HAP-1 (cell line): ENCODE measurements at regions of chr17 and their contacts with region 1.

Region 1: GRCh38 chr17:40303009-40303657 is 5.8 kb upstream of the RARA start:
- DNase-seq: peak; percentile 47 to 48
- H3K4me3 ChIP-seq: no peak overlapping the region
- H3K4me1 ChIP-seq: peaks cover 8% of the 10 kb centered on the region
- H3K27me3 ChIP-seq: no peaks in the 10 kb centered on the region

Region 2: GRCh38 chr17:39939588-39940419 is 363.3 kb before region 1 on chr17:
- in situ Hi-C with region 1: no loop called
- DNase-seq: peak in 1 of 2 experiments; percentile 32
- H3K4me3 ChIP-seq: no peak overlapping the region
- H3K4me1 ChIP-seq: no peaks in the 10 kb centered on the region
- H3K27me3 ChIP-seq: peaks cover 4% of the 10 kb centered on the region; the same call in 1 of the 2 replicates

Region 3: DNA sequence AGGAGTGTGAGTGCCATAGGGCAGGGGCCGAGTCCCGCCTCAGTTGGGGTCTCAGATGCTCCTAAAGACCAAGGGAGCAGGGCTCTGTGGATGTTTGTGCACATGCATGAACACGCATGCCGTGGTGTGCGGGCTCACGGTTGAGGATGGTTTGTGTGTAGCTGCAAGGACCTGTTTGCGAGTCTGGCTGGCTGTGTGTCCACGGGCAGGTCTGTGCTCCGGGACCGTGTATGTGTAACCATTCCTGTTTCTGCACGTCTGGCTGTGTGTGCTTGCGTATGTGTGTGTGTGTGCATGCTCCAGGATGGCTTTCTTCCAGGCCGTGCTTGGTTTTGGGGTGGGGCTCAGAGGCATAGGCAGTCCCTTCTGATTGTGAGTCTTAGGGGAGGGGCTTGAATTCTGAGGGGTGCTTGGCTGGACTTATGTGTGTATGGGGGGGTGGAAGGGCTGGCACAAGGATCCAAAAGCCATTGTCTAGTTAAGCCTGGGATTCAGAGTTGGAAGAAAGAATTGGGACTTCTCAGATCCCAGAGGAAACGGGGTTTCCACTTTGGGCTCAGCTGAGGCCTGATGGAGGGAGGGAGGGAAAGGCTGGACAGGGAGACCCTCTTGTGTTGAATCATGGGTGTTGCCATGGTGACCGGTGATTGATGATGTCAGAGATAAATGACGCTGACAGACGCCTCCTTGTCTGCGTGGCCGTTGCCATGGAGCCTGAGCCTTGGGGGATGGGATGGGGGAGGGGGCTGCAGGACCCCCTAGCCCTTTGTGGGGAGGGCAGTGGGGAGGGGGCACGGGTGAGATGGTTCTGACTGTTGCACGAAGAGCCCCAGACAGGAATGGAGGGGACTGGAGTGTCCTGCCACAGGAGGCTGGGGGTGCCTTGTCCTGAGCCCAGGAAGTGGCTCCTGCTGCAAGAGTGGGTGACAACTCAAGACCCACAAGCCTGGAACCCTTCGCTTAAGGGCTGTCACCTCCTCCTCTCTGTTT is 47.1 kb after region 1 on chr17:
- in situ Hi-C with region 1: loop called (anchors 5 kb)
- DNase-seq: peak; percentile 15 to 69
- H3K4me3 ChIP-seq: no peak overlapping the region
- H3K4me1 ChIP-seq: peaks cover 29% of the 10 kb centered on the region
- H3K27me3 ChIP-seq: no peaks in the 10 kb centered on the region